CD8-positive, alpha-beta T cell (primary cell): ENCODE measurements at regions of chr12 and their contacts with region 1.

Region 1: GRCh38 chr12:125254856-125255255 is 189.6 kb downstream of the AACS start:
- DNase-seq: no peak
- ATAC-seq: no peak
- H3K4me3 ChIP-seq: no peak overlapping the region
- H3K4me3 Mint-ChIP-seq: no peak overlapping the region
- H3K27ac ChIP-seq: no peak overlapping the region
- H3K27ac Mint-ChIP-seq: no peak overlapping the region
- H3K4me1 ChIP-seq: no peaks in the 10 kb centered on the region
- H3K4me1 Mint-ChIP-seq: no peaks in the 10 kb centered on the region
- H3K27me3 ChIP-seq: no peaks in the 10 kb centered on the region
- H3K27me3 Mint-ChIP-seq: no peaks in the 10 kb centered on the region
- CTCF ChIP-seq: no peak

Region 2: GRCh38 chr12:125100551-125101434 is 154.1 kb before region 1 on chr12:
- CTCF ChIA-PET with region 1: no interaction called
- POLR2A ChIA-PET with region 1: no interaction called
- intact Hi-C with region 1: no loop called
- DNase-seq: no peak
- ATAC-seq: no peak
- H3K4me3 ChIP-seq: no peak overlapping the region
- H3K4me3 Mint-ChIP-seq: no peak overlapping the region
- H3K27ac ChIP-seq: no peak overlapping the region
- H3K27ac Mint-ChIP-seq: no peak overlapping the region
- H3K4me1 ChIP-seq: peaks cover 5% of the 10 kb centered on the region
- H3K4me1 Mint-ChIP-seq: peaks cover 14% of the 10 kb centered on the region
- H3K27me3 ChIP-seq: no peaks in the 10 kb centered on the region
- H3K27me3 Mint-ChIP-seq: no peaks in the 10 kb centered on the region
- CTCF ChIP-seq: no peak

Region 3: DNA sequence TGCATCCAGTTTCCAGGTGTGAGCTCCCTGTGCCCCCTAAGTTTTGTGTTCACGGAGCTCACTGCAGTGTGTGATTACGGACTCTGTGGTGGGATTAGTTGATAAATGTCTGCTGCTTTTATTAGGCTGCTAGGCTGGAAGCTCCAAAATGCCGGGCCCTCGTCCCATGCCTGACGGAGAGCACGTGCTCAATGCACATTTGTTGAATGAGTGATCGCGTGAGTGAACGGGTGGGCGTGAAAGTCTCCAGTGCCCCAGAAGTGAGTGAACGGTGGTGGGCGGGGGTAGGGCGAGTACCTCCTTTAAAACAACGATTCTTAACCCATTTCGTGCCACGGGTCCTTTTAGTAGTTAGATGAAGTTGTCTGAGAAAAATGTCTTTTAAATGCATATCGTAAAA is 14.1 kb before region 1 on chr12:
- CTCF ChIA-PET with region 1: no interaction called
- POLR2A ChIA-PET with region 1: no interaction called
- intact Hi-C with region 1: loop called in 1 of 2 experiments (anchors 1 kb)
- DNase-seq: no peak
- ATAC-seq: no peak
- H3K4me3 ChIP-seq: no peak overlapping the region
- H3K4me3 Mint-ChIP-seq: no peak overlapping the region
- H3K27ac ChIP-seq: no peak overlapping the region
- H3K27ac Mint-ChIP-seq: no peak overlapping the region
- H3K4me1 ChIP-seq: no peaks in the 10 kb centered on the region
- H3K4me1 Mint-ChIP-seq: no peaks in the 10 kb centered on the region
- H3K27me3 ChIP-seq: no peaks in the 10 kb centered on the region
- H3K27me3 Mint-ChIP-seq: peaks cover 20% of the 10 kb centered on the region
- CTCF ChIP-seq: no peak

Region 4: DNA sequence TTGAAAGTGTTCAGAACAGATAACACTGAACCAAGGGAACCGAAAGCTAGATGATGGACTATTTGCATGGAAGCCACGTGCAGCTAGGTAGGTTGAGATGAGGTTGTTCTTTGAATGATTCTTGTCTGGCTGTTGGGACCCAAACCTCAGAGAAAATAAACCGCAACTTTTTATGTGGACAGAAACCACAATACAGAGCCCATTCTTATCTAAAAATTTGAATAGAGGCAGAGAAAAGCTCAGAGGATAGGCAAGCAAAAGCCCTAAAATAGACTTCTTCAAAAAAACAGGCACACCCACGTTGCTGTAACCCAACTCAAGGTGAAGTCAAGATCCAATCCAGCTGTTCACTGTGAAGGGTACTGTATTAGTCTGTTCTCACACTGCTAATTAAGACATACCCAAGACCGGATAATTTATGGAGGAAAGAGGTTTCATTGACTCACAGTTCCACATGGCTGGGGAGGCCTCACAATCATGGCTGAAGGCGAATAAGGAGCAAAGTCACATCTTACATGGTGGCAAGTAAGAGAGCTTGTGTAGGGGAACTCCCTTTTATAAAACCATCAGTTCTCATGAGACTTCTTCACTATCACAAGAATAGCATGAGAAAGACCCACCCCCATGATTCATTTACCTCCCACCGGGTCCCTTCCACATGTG is 164.2 kb after region 1 on chr12:
- CTCF ChIA-PET with region 1: no interaction called
- POLR2A ChIA-PET with region 1: no interaction called
- intact Hi-C with region 1: no loop called
- DNase-seq: no peak
- ATAC-seq: no peak
- H3K4me3 ChIP-seq: no peak overlapping the region
- H3K4me3 Mint-ChIP-seq: no peak overlapping the region
- H3K27ac ChIP-seq: no peak overlapping the region
- H3K27ac Mint-ChIP-seq: no peak overlapping the region
- H3K4me1 ChIP-seq: no peaks in the 10 kb centered on the region
- H3K4me1 Mint-ChIP-seq: no peaks in the 10 kb centered on the region
- H3K27me3 ChIP-seq: no peaks in the 10 kb centered on the region
- H3K27me3 Mint-ChIP-seq: no peaks in the 10 kb centered on the region
- CTCF ChIP-seq: no peak